ENCODE measurements at regions of chr10 and their contacts with region 1.

Region 1: DNA sequence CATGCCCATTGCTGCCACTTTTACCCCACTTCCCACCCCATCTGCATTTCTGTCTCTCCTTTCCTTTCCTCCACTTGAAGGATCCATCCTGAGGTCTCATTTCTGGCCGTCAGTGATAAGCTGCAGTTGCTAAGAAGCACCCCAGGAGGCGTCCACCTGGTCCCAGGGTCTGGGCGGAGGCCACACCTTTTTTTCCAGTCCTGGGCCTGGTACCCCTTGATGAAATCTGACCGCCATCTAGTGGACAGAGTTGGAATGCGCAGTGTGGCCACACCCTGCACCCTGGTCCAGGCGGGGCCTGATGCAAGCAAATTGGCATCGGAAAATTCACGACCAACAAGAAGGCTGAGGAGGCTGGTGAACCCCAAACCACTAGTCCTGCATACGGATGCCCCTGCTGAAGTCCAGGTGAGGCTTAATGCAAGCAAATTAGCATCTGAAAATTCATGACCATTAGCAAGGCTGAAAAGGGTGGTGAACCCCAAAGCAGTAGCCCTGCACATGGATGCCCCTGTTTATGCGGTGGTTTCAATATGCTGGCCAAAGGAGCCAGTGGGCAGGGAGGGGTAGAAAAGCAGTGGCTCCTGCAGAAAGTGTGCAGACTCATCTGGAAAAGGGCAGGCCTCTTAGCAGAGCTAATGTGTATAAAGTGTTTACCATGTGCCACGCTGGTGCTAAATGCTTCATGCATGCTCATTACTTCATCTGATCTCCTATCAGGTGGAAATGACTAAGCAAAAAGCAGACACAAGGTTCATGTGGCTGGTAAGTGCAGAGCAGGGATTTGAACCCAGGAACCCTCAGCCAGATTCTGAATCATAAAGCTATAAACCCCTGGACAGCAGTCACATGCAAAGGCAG is 43.2 kb downstream of the GPAM start:
- ATAC-seq: peak; percentile 78 to 95 (median 90)
- H3K4me3 ChIP-seq: no peak overlapping the region
- H3K27ac ChIP-seq: no peak overlapping the region
- H3K4me1 ChIP-seq: peaks cover 0 to 3% of the 10 kb centered on the region in 2 donors

Region 2: GRCh38 chr10:110610308-110610774 is 1530.0 kb before region 1 on chr10:
- in situ Hi-C with region 1: loop called in 1 of 9 experiments (anchors 25 kb)
- ATAC-seq: peak; percentile 61 to 76 (median 68)
- H3K4me3 ChIP-seq: peak overlapping the region in 1 of 5 donors; percentile 0
- H3K27ac ChIP-seq: peak overlapping the region in 1 of 2 donors; percentile 15
- H3K4me1 ChIP-seq: peaks cover 6 to 10% of the 10 kb centered on the region in 2 donors

Region 3: GRCh38 chr10:111076191-111076681 is 1064.1 kb before region 1 on chr10:
- in situ Hi-C with region 1: loop called in 5 of 9 experiments (anchors 5 to 25 kb)
- ATAC-seq: peak; percentile 71 to 83 (median 80)
- H3K4me3 ChIP-seq: peak overlapping the region; percentile 36 to 50 (median 45)
- H3K27ac ChIP-seq: no peak overlapping the region
- H3K4me1 ChIP-seq: peaks cover 0 to 6% of the 10 kb centered on the region in 2 donors

Region 4: GRCh38 chr10:111756217-111757061 is 383.9 kb before region 1 on chr10:
- in situ Hi-C with region 1: loop called in 1 of 9 experiments (anchors 25 kb)
- ATAC-seq: peak; percentile 78 to 98 (median 91)
- H3K4me3 ChIP-seq: no peak overlapping the region
- H3K27ac ChIP-seq: no peak overlapping the region
- H3K4me1 ChIP-seq: peaks cover 0 to 6% of the 10 kb centered on the region in 2 donors

Region 5: GRCh38 chr10:112446855-112447711 is 306.7 kb after region 1 on chr10 and contains the starts of genes VTI1A and ZDHHC6:
- in situ Hi-C with region 1: loop called in 2 of 9 experiments (anchors 25 kb)
- ATAC-seq: peak; percentile 91 to 99 (median 98)
- H3K4me3 ChIP-seq: peak within 1 kb of the TSS; percentile 91 to 99 (median 97)
- H3K27ac ChIP-seq: peak within 1 kb of the TSS; percentile 97
- H3K4me1 ChIP-seq: peaks cover 5 to 17% of the 10 kb centered on the region in 2 donors
- total RNA-seq, gene VTI1A: 29.8 to 55.3 (median 42.6) TPM
- total RNA-seq, gene ZDHHC6: 18.5 to 37.3 (median 27.2) TPM

Measured in motor neuron (in vitro differentiated cells).